Vagina (tissue), 2 donors: ENCODE measurements at regions of chr4 and their contacts with region 1.

Region 1: DNA sequence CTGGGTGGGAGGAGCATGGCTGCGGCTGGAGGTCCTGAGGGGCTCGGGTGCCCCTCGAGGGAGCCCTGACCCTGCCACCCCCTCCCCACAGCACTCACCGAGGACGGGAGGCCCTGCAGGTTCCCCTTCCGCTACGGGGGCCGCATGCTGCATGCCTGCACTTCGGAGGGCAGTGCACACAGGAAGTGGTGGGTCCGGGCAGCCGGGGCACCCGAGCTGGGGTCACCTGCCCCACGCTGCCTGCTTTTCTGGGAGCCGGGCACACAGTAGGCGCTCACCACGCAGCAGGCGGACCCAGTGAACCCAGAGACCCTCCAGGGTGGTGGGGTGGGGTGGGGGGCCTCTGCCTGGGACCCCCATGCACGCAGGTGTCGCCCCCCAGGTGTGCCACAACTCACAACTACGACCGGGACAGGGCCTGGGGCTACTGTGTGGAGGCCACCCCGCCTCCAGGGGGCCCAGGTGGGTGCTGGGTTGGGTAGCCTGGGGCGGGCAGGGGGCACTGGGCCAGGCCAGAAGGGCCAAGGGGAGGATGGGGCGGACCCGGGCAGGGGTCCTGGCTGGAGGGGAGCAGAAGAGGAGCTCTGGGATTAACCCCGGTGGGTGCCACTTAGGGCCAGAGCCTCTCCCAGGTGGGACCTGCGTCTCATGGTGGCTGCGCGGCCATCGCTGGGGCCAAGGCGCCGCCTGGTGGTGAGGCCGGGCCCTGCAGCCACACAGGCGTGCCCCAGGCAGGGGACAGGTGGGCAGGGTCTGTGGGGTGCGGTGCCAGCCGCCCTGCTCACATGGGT is 1.4 kb downstream of the HGFAC start:
- DNase-seq: no peak
- H3K4me3 ChIP-seq: no peak overlapping the region
- H3K27ac ChIP-seq: no peak overlapping the region
- H3K4me1 ChIP-seq: peaks cover 5% of the 10 kb centered on the region
- H3K27me3 ChIP-seq: no peaks in the 10 kb centered on the region
- CTCF ChIP-seq: peak; percentile 97 to 99 (median 97)
- POLR2A ChIP-seq: no peak

Region 2: GRCh38 chr4:3346146-3346545 is 97.0 kb before region 1 on chr4:
- intact Hi-C with region 1: loop called (anchors 5 kb)
- DNase-seq: peak in 1 of 2 donors; percentile 77
- H3K4me3 ChIP-seq: no peak overlapping the region
- H3K27ac ChIP-seq: no peak overlapping the region
- H3K4me1 ChIP-seq: peaks cover 14% of the 10 kb centered on the region
- H3K27me3 ChIP-seq: no peaks in the 10 kb centered on the region
- CTCF ChIP-seq: peak; percentile 56 to 93 (median 92)
- POLR2A ChIP-seq: no peak